Common myeloid progenitor, CD34-positive (primary cell): ENCODE measurements at regions of chr5 and their contacts with region 1.

Region 1: GRCh38 chr5:146118322-146118721 is 12.9 kb upstream of the PLAC8L1 start:
- DNase-seq: no peak
- H3K4me3 ChIP-seq: no peak overlapping the region
- H3K27ac ChIP-seq: no peak overlapping the region
- H3K4me1 ChIP-seq: no peaks in the 10 kb centered on the region
- H3K27me3 ChIP-seq: no peaks in the 10 kb centered on the region

Region 2: GRCh38 chr5:146068977-146069779 is 49.1 kb before region 1 on chr5:
- CTCF ChIA-PET with region 1: no interaction called
- POLR2A ChIA-PET with region 1: no interaction called
- DNase-seq: no peak
- H3K4me3 ChIP-seq: no peak overlapping the region
- H3K27ac ChIP-seq: no peak overlapping the region
- H3K4me1 ChIP-seq: no peaks in the 10 kb centered on the region
- H3K27me3 ChIP-seq: peaks cover 0 to 2% (median 0%) of the 10 kb centered on the region in 5 experiments

Region 3: GRCh38 chr5:146130440-146131045 is 12.2 kb after region 1 on chr5:
- CTCF ChIA-PET with region 1: interaction called, 17 read pairs
- POLR2A ChIA-PET with region 1: interaction called, 6 read pairs
- DNase-seq: peak; percentile 59 to 80 (median 78)
- H3K4me3 ChIP-seq: no peak overlapping the region
- H3K27ac ChIP-seq: no peak overlapping the region
- H3K4me1 ChIP-seq: peaks cover 0 to 3% (median 0%) of the 10 kb centered on the region in 4 experiments
- H3K27me3 ChIP-seq: no peaks in the 10 kb centered on the region